ENCODE measurements at regions of chr15 and their contacts with region 1.

Region 1: DNA sequence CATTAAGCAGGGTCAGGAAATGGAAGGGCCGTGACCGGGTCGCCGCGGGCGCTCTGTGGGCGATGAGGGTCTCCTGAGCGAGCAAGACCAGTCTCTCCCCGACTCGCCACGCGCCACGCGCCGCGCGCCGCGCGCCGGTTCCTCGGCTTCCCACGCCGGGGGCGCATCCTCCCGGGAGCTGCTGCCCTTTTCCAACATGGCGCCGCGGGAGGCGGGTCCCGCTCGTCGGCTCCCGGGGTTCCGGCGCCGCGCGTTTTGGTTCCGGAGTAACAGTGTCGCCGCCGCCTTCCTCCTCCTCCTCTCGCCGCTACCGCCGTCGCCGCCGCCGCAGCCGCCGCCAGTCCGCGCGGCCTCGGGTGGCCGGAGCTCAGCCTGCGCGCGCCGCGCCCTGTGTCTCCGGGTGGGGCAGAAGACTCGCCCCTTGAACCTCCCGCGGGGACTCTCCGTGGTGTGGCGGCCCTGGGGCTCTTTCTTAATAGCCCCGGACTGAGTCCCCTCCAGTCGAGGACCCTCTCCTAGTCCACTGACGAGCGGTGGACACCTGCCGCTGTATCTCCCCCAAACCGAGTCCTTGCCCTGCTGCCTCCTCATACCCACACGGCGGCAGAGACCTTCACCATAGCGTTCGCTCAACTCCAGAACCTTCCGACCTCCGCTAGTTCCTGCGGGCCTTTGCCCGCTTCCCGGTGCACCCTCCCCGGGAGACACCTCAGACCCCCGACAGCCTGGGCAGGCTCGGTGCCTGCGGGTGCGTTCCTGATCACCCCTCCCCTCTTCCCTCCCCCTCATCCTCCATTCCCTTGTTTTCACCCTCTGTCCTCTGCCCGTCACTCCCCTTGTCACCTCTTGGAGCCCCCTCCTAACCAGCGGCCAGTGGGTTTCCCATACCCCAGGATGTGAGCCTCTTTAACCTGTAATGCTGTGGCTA is at the start of gene MAP2K5:
- DNase-seq: peak; percentile 96
- H3K4me3 ChIP-seq: peak within 1 kb of the TSS; percentile 73 to 97 (median 90)
- H3K27ac ChIP-seq: peak within 1 kb of the TSS; percentile 86 to 90 (median 87)
- H3K4me1 ChIP-seq: peaks cover 15 to 43% (median 28%) of the 10 kb centered on the region in 4 donors
- H3K27me3 ChIP-seq: no peaks in the 10 kb centered on the region
- CTCF ChIP-seq: peak in 1 of 3 experiments; percentile 9
- EP300 ChIP-seq: no peak
- POLR2A ChIP-seq: no peak
- total RNA-seq, gene MAP2K5: 7.8 to 11.9 (median 10.6) TPM

Region 2: GRCh38 chr15:67521812-67522563 is 20.7 kb before region 1 on chr15:
- intact Hi-C with region 1: loop called (anchors 2 kb)
- DNase-seq: no peak
- H3K4me3 ChIP-seq: peak overlapping the region; percentile 79 to 89 (median 86)
- H3K27ac ChIP-seq: peak overlapping the region; percentile 92 to 98 (median 94)
- H3K4me1 ChIP-seq: peaks cover 21 to 43% (median 32%) of the 10 kb centered on the region in 4 donors
- H3K27me3 ChIP-seq: no peaks in the 10 kb centered on the region
- CTCF ChIP-seq: no peak
- EP300 ChIP-seq: no peak
- POLR2A ChIP-seq: no peak

Region 3: GRCh38 chr15:67783303-67783702 is 240.6 kb after region 1 on chr15:
- intact Hi-C with region 1: no loop called
- DNase-seq: peak; percentile 37
- H3K4me3 ChIP-seq: no peak overlapping the region
- H3K27ac ChIP-seq: no peak overlapping the region
- H3K4me1 ChIP-seq: no peaks in the 10 kb centered on the region
- H3K27me3 ChIP-seq: no peaks in the 10 kb centered on the region
- CTCF ChIP-seq: no peak
- EP300 ChIP-seq: no peak
- POLR2A ChIP-seq: no peak

Region 4: DNA sequence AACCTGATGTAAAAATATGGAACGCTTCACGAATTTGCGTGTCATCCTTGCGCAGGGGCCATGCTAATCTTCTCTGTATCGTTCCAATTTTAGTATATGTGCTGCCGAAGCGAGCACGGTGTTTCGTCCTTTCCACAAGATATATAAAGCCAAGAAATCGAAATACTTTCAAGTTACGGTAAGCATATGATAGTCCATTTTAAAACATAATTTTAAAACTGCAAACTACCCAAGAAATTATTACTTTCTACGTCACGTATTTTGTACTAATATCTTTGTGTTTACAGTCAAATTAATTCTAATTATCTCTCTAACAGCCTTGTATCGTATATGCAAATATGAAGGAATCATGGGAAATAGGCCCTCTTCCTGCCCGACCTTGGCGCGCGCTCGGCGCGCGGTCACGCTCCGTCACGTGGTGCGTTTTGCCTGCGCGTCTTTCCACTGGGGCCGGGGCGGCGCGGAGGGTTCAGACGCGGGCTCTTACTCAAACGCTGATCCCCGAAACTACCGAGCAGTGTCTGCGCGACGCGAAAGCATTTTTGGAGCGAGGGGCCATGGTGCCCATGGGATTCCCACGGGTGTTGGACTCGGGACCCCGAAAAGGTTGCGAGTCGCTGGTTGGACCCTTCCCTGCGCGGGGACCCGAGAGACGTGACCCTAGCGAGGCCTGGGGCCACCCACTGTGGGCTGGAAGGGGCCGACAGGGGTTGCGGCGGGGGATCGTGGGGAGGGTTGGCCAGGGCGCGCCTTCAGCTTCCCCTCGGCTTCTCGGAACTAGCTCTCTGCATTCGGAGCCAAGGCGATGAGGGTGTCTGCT is 297.5 kb after region 1 on chr15 and contains the start of gene RNU6-1:
- intact Hi-C with region 1: loop called (anchors 10 kb)
- DNase-seq: peak; percentile 98
- H3K4me3 ChIP-seq: peak within 1 kb of the TSS; percentile 75 to 92 (median 83)
- H3K27ac ChIP-seq: peak within 1 kb of the TSS; percentile 95 to 99 (median 97)
- H3K4me1 ChIP-seq: peaks cover 26 to 50% (median 46%) of the 10 kb centered on the region in 4 donors
- H3K27me3 ChIP-seq: peaks cover 0 to 11% (median 11%) of the 10 kb centered on the region in 4 donors
- CTCF ChIP-seq: no peak
- EP300 ChIP-seq: no peak
- POLR2A ChIP-seq: peak; percentile 63
- total RNA-seq, gene RNU6-1: not detected

Region 5: DNA sequence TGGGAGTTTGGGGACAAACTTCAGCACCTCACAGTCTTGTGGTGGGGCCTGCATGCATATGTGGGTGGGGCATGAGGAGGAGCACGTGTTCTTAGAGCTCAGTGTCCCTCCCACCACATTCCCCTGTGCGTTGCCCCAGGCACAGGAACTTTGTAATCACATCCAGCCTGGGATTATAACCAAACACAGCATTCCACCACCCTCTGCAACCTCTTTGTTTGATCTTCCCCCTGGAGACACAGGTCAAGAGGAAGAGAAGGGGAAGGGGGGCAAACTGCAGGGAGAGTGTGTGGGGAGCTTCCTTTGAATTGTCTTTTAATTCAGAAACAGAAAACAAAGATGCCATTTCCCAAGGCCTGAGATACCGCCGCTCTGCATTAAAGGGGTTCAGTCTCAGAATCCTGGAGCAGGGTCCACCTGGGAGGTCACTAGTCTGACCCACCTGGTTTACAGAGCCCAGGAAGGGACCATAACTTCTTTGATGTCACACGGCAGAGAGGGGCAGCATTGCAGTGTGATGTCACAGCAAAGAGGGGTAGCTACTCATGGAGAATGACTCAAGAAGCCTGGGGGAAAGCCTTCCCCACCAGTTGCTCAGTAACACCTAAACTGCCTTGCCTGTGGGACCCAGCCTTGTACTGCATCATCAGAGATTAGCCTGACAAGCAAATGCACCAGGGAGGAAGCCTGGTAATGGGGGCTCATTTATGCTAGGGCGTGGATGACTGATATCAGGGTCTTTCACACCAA is 403.4 kb after region 1 on chr15:
- intact Hi-C with region 1: no loop called
- DNase-seq: peak; percentile 70
- H3K4me3 ChIP-seq: peak overlapping the region in 2 of 4 donors; percentile 1 to 24
- H3K27ac ChIP-seq: peak overlapping the region; percentile 6 to 80 (median 76)
- H3K4me1 ChIP-seq: peaks cover 29 to 56% (median 42%) of the 10 kb centered on the region in 4 donors
- H3K27me3 ChIP-seq: no peaks in the 10 kb centered on the region
- CTCF ChIP-seq: no peak
- EP300 ChIP-seq: no peak
- POLR2A ChIP-seq: no peak

Measured in esophagus muscularis mucosa (tissue), 4 donors.